ENCODE measurements at regions of chr5 and their contacts with region 1.

Region 1: DNA sequence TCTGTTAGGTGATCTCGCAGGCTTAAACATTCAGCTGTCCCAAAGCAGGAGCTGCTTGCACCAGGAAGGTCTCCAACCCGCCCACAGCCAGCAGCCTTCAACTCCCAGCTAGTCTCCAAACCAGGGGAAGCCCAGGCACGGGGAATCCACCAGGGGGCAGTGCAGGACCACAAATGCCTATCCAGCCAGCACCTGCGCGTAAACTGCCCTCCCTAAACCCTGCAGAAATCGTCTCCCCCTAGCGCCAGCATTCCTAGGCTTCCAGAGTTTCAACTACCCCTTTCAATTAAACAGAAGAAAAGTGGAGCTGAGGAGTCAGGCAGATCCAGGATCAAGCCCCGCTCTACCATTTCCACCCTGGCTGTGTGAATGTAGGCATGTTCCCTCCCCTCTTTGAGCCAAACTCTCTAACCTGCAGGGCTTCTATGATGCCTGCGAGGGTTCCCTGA is 72.0 kb downstream of the HRH2 start:
- DNase-seq: peak; percentile 100
- ATAC-seq: peak; percentile 87
- H3K4me3 Mint-ChIP-seq: peak overlapping the region; percentile 74
- H3K27ac Mint-ChIP-seq: no peak overlapping the region
- H3K4me1 Mint-ChIP-seq: peaks cover 27% of the 10 kb centered on the region
- H3K27me3 Mint-ChIP-seq: peaks cover 5% of the 10 kb centered on the region
- CTCF ChIP-seq: peak; percentile 98

Region 2: DNA sequence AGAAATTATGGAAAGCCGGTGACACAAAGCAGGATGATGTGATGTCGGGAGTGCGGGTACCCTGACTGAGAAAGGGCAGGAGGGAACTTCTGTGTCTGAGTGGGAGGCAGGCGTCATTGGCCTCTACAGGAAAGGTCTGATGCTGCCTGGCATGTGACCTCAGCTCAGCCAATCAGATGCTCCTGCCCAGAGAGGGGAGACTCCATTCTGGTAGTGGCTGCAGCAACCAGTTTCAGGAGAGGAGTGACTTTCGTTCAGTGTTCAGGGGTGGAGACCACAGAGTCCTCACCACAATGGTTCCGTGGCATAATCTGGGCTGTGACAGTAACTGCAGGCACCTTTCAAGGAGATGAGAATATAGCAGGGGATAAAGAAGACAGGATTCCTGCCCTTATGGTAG is 258.2 kb before region 1 on chr5:
- CTCF ChIA-PET with region 1: no interaction called
- POLR2A ChIA-PET with region 1: no interaction called
- DNase-seq: no peak
- ATAC-seq: peak; percentile 66
- H3K4me3 Mint-ChIP-seq: no peak overlapping the region
- H3K27ac Mint-ChIP-seq: no peak overlapping the region
- H3K4me1 Mint-ChIP-seq: peaks cover 2% of the 10 kb centered on the region; the same call in 1 of the 2 replicates
- H3K27me3 Mint-ChIP-seq: peaks cover 16% of the 10 kb centered on the region
- CTCF ChIP-seq: no peak

Region 3: GRCh38 chr5:175617447-175617846 is 112.4 kb before region 1 on chr5:
- CTCF ChIA-PET with region 1: interaction called, 10 read pairs
- POLR2A ChIA-PET with region 1: no interaction called
- DNase-seq: peak; percentile 62
- ATAC-seq: peak; percentile 93
- H3K4me3 Mint-ChIP-seq: no peak overlapping the region
- H3K27ac Mint-ChIP-seq: no peak overlapping the region; the same call in 1 of the 2 replicates
- H3K4me1 Mint-ChIP-seq: peaks cover 11% of the 10 kb centered on the region
- H3K27me3 Mint-ChIP-seq: peaks cover 7% of the 10 kb centered on the region
- CTCF ChIP-seq: no peak

Region 4: DNA sequence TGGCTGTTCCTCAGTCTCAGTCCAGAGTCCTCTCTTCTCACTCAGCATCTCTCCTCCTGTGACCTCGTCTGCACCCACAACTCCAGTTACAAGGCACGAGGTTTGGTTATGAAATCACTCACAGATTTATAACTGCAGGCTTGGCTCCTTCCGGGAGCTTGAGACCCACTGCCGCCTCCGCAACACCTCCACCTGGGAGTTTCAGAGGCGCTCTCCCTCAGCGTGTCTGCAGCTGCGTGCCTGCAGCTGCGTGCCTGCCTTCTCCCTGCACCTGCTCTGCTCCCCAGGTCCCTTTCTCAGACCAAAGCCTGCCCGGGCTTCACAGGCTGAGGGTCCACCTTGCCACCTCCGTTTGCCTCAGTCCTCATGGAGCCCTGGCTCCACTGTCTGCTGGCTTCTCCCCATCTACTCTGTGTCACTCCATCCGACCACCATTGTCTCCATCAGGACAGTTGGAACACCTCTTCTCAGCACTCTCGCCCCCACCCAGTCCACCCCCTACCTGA is 20.5 kb before region 1 on chr5:
- CTCF ChIA-PET with region 1: interaction called, 16 read pairs
- POLR2A ChIA-PET with region 1: no interaction called
- DNase-seq: peak; percentile 6
- ATAC-seq: no peak
- H3K4me3 Mint-ChIP-seq: no peak overlapping the region
- H3K27ac Mint-ChIP-seq: no peak overlapping the region
- H3K4me1 Mint-ChIP-seq: no peaks in the 10 kb centered on the region
- H3K27me3 Mint-ChIP-seq: peaks cover 8% of the 10 kb centered on the region; the same call in 1 of the 2 replicates
- CTCF ChIP-seq: no peak

Region 5: DNA sequence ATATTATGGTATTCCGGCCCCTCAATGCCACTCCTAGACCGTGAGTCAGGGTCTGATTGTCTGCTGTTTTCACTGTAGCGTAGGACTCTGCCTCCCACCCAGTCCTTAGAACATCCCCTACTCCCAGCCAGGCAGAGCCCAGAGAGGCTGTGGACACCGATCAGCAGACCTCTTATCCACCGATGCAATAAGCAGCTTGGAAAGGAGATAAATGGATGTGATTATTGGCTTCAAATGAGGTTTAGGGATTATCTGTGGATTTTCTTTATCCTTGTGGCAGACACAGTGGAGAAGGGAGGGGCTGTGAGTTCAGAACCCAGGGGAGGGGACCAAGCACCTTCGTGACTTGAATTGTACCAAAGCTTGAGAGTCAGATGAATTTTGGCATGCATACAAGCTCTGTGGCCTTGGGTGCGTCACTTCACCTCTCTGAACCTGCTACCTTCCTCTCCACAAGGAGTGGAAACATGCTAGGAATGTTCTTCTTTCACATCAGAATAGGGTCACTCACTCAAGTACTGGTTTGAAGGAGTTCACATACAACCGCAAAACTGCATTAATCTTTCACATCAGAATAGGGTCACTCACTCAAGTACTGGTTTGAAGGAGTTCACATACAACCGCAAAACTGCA is 58.4 kb after region 1 on chr5:
- CTCF ChIA-PET with region 1: interaction called, 15 read pairs
- POLR2A ChIA-PET with region 1: no interaction called
- DNase-seq: no peak
- ATAC-seq: no peak
- H3K4me3 Mint-ChIP-seq: no peak overlapping the region
- H3K27ac Mint-ChIP-seq: no peak overlapping the region
- H3K4me1 Mint-ChIP-seq: no peaks in the 10 kb centered on the region
- H3K27me3 Mint-ChIP-seq: 0 out of 2 replicates have a peak, but pooled peaks cover 6% of the 10 kb centered on the region
- CTCF ChIP-seq: no peak

Region 6: DNA sequence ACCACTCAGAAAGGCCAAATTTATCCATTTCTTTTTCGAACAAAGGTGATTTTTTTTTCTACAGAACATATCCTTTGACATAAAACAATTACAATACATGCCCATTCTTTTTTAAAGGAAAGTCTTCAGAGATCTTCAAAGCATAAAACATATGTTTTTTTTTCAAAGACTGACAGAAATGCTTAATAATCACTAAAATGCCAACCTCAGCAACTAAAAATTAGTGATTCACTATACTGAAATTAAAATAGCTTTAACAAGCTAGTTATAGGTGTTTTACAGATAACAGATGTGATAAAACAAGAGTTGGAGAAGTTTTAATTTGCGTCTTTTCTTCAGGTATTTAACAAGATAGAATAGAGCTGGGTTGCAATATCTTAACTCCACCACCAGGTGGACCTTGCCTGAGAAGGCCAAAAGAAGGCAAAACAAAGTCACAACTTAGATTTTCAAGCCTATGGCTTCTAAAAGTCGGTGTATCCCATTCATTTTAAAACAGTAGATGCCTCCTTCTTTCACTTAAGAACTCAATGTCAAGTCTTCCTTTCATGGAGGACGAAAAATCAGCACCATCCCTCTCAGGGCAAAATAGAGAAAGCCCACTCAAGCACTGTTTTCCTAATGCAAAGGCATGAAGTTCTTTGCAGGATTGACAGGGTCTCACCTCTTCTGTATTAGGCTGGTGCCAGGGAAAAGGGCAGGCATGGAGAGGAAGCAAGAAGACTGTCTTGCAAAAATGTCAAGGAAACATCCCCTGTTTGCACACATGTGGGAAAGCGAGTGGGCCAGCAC is 110.4 kb after region 1 on chr5:
- CTCF ChIA-PET with region 1: interaction called, 35 read pairs
- POLR2A ChIA-PET with region 1: no interaction called
- DNase-seq: no peak
- ATAC-seq: no peak
- H3K4me3 Mint-ChIP-seq: no peak overlapping the region
- H3K27ac Mint-ChIP-seq: no peak overlapping the region
- H3K4me1 Mint-ChIP-seq: peaks cover 32% of the 10 kb centered on the region
- H3K27me3 Mint-ChIP-seq: no peaks in the 10 kb centered on the region
- CTCF ChIP-seq: peak; percentile 85

Region 7: GRCh38 chr5:175885813-175886212 is 156.0 kb after region 1 on chr5:
- CTCF ChIA-PET with region 1: interaction called, 20 read pairs
- POLR2A ChIA-PET with region 1: interaction called, 3 read pairs
- DNase-seq: no peak
- ATAC-seq: no peak
- H3K4me3 Mint-ChIP-seq: no peak overlapping the region
- H3K27ac Mint-ChIP-seq: no peak overlapping the region
- H3K4me1 Mint-ChIP-seq: peaks cover 13% of the 10 kb centered on the region
- H3K27me3 Mint-ChIP-seq: no peaks in the 10 kb centered on the region
- CTCF ChIP-seq: no peak

Region 8: GRCh38 chr5:176405656-176406427 is 676.0 kb after region 1 on chr5:
- CTCF ChIA-PET with region 1: interaction called, 14 read pairs
- POLR2A ChIA-PET with region 1: no interaction called
- DNase-seq: peak; percentile 54
- ATAC-seq: peak; percentile 89
- H3K4me3 Mint-ChIP-seq: no peak overlapping the region
- H3K27ac Mint-ChIP-seq: peak overlapping the region; percentile 75
- H3K4me1 Mint-ChIP-seq: peaks cover 3% of the 10 kb centered on the region
- H3K27me3 Mint-ChIP-seq: no peaks in the 10 kb centered on the region
- CTCF ChIP-seq: no peak